ENCODE measurements at regions of chr14 and their contacts with region 1.

Region 1: GRCh38 chr14:102694530-102695166 is 82.6 kb upstream of the TRAF3 start:
- DNase-seq: peak in 3 of 5 donors; percentile 42 to 48 (median 42)
- ATAC-seq: peak; percentile 47 to 77 (median 74)
- H3K4me3 ChIP-seq: no peak overlapping the region
- H3K27ac ChIP-seq: no peak overlapping the region
- H3K4me1 ChIP-seq: peaks cover 0 to 41% (median 15%) of the 10 kb centered on the region in 12 donors
- H3K27me3 ChIP-seq: no peaks in the 10 kb centered on the region
- CTCF ChIP-seq: peak; percentile 69 to 81 (median 76)
- POLR2A ChIP-seq: no peak

Region 2: GRCh38 chr14:102591889-102592763 is 102.5 kb before region 1 on chr14 and contains the start of gene RCOR1:
- intact Hi-C with region 1: loop called in 3 of 10 experiments (anchors 5 to 10 kb)
- DNase-seq: peak; percentile 98 to 99 (median 99)
- ATAC-seq: peak; percentile 93 to 96 (median 95)
- H3K4me3 ChIP-seq: peak within 1 kb of the TSS; percentile 73 to 99 (median 92)
- H3K27ac ChIP-seq: peak within 1 kb of the TSS; percentile 97 to 99 (median 98)
- H3K4me1 ChIP-seq: peaks cover 5 to 28% (median 20%) of the 10 kb centered on the region in 12 donors
- H3K27me3 ChIP-seq: no peaks in the 10 kb centered on the region
- CTCF ChIP-seq: no peak
- POLR2A ChIP-seq: peak in 1 of 2 donors; percentile 58
- total RNA-seq, gene RCOR1: 8.5 to 20.9 (median 12.8) TPM

Region 3: GRCh38 chr14:102917469-102918211 is 223.0 kb after region 1 on chr14:
- intact Hi-C with region 1: loop called in 8 of 10 experiments (anchors 2 to 10 kb)
- DNase-seq: peak in 1 of 5 donors; percentile 67
- ATAC-seq: peak in 2 of 4 donors; percentile 45 to 50
- H3K4me3 ChIP-seq: no peak overlapping the region
- H3K27ac ChIP-seq: no peak overlapping the region
- H3K4me1 ChIP-seq: peaks cover 0 to 2% (median 0%) of the 10 kb centered on the region in 12 donors
- H3K27me3 ChIP-seq: peaks cover under 1 to 10% (median 7%) of the 10 kb centered on the region in 9 donors
- CTCF ChIP-seq: peak; percentile 44 to 68 (median 57)
- POLR2A ChIP-seq: no peak

Region 4: DNA sequence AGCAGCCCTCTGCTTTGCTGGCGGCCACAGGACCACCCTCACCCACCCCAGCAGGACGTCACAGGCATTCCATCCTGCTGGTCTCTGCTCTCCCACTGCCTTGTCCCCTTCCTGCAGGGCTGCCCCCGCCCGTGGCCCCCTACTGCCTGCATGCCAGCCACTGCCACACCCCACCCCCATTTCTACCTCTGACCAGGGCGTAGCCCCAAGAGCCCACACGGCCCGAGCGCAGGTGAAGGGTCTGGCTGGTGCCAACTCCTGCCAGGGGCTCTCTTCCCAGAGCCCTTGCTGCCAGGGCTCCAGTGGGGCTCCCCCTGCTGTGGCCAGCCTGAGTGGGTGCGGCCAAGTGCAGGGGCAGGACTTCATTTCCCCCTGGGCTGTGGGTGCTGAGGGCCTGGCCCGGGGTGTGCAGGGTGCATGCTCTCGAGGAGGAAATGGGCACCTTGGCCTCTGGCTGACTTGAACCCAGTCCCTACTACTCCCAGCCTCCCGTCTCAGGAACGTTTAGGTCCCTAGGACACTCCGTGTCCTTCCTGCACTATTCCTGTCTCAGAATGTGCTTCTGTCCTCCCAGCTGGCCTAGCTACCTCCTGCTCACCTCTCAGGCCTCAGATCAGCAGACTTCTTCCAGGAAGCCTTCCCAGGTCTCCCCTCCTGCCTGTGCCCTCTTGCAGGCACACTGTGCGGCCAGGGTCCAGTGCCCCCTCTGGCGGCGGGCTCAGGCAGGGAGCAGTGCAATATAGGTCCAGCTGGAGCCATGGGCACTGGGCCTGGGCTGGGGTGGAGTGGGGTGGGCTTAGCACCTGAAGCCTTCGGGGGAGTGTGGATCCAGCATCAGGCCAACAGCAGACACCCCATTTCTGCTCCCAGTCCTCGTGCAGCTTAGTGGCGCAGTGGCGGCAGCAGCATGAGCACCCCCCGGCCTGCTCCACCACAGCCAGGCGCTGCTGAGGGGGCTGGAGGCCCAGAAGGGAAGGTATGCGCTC is 390.8 kb after region 1 on chr14:
- intact Hi-C with region 1: loop called in 3 of 10 experiments (anchors 10 kb)
- DNase-seq: peak in 3 of 5 donors; percentile 6 to 50 (median 15)
- ATAC-seq: peak in 1 of 4 donors; percentile 40
- H3K4me3 ChIP-seq: no peak overlapping the region
- H3K27ac ChIP-seq: no peak overlapping the region
- H3K4me1 ChIP-seq: peaks cover 0 to 7% (median 0%) of the 10 kb centered on the region in 12 donors
- H3K27me3 ChIP-seq: peaks cover 0 to 47% (median 19%) of the 10 kb centered on the region in 9 donors
- CTCF ChIP-seq: peak in 3 of 12 donors; percentile 10 to 17 (median 12)
- POLR2A ChIP-seq: no peak

Region 5: DNA sequence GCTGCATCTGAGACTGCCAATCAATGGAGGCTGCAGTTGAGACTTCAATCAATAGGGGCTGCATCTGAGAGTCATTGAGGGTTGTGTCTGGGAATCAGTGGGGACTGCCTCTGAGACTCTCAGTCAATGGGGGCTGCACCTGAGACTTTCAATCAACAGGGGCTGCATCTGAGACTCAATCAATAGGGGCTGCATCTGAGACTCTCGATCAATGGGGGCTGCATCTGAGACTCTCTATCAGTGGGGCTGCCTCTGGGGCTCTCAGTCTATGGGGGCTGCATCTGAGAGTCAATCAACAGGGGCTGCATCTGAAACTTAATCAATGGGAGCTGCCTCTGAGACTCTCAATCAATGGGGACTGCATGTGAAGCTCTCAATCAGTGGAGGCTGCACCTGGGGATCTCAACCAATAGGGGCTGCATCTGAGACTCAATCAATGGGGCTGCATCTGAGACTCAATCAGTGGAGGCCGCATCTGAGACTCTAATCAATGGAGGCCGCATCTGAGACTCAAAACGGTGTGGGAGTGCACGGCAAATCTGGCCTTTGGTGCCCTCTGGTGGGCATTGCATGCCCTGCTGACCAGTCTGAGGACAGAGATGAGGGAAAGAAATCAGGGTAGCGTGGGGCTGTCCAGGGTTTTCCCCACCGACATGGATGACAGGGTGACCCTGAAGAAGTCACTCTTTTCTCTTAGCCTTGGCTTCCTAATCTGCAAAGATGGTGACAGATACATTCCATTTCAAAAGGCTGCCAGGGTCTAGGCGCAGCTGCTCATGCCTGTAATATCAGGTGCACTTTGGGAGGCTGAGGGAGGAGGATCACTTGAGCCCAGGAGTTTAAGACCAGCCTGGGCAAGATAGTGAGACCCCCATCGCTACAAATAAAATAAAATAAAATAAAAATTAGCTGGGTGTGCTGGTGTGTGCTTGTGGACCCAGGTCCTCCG is 598.1 kb after region 1 on chr14:
- intact Hi-C with region 1: loop called in 2 of 10 experiments (anchors 5 kb)
- DNase-seq: peak; percentile 69 to 85 (median 76)
- ATAC-seq: peak; percentile 74 to 94 (median 90)
- H3K4me3 ChIP-seq: no peak overlapping the region
- H3K27ac ChIP-seq: no peak overlapping the region
- H3K4me1 ChIP-seq: no peaks in the 10 kb centered on the region
- H3K27me3 ChIP-seq: peaks cover 0 to 25% (median 0%) of the 10 kb centered on the region in 9 donors
- CTCF ChIP-seq: peak; percentile 85 to 98 (median 88)
- POLR2A ChIP-seq: no peak